Activated CD4-positive, alpha-beta T cell treated with anti-CD3 and anti-CD28 coated beads, Interleukin-2, amount 10 ng/mL, durations not matched to agents 24 days and 14 days (primary cell): ENCODE measurements at regions of chr10 and their contacts with region 1.

Region 1: DNA sequence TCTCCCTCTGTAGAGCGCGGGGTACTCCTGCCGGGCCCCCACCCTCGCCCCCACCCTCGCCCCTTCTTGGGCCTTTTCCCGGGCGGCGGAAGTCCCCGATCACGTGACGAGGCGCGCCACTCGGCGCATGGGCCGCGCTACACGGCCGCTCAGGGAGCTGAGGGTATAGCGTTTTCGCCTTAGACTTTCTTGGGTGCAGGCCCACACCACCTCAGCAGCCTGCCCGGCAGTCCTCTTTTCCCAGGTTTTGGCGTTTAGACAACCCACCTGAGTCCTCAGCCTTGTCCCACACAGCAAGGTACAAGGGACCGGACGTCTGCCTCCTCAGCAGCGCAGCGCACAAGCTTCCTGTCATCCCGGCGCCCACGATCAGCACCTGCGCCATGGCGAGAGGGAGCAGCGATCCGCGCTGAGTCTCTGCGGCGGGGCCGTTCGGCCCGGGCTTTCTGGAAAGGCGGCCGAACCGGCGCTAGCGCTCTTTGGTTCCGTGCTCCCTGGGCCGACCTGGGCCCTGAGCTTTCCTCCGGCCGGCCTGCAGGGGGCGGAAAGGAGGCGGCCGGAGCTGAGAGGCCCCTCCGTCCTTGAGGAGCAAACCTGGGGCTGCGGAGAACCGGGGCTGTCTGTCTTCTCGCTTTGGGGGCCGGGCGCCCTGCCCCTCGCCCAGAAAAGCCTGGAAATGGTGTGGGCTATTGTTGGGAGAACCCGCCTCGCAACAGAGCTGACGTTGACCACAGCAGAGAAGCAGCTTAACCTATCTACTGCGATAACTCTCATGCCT is at the start of gene RNLS:
- DNase-seq: peak; percentile 88
- H3K4me3 Mint-ChIP-seq: peak within 1 kb of the TSS; percentile 87
- H3K27ac Mint-ChIP-seq: peak within 1 kb of the TSS; percentile 89
- H3K4me1 Mint-ChIP-seq: peaks cover 8% of the 10 kb centered on the region
- H3K27me3 Mint-ChIP-seq: peaks cover 19% of the 10 kb centered on the region
- total RNA-seq, gene RNLS: 2.1 and 2.4 TPM in 2 replicates

Region 2: DNA sequence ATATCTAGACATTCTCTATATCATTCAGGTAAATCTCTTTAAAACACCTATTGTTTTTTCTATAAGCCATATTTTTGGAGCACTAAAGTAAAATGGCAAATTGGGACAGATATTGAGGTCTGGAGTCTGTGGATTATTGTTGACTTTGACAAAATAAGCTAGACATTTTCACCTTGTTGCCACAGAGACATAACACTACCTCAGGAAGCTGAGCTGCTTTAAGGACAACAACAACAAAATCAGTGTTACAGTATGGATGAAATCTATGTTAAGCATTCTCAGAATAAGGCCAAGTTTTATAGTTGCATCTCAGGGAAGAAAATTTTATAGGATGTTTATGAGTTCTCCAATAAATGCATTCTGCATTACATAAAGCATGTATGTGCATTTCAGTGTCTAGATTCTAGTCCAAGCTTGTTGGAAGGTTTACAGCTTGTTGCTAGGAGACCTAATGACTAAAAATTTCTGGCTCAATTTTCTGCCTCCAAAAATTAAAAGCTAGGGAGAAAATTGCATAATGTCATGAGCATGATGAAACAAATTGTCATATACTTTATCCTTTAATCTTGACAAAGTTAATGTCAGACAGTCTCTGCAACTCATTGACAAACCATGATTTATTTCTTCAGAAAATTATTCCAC is 237.9 kb after region 1 on chr10:
- intact Hi-C with region 1: loop called (anchors 10 kb)
- DNase-seq: no peak
- H3K4me3 Mint-ChIP-seq: no peak overlapping the region
- H3K27ac Mint-ChIP-seq: no peak overlapping the region
- H3K4me1 Mint-ChIP-seq: peaks cover 19% of the 10 kb centered on the region
- H3K27me3 Mint-ChIP-seq: peaks cover 10% of the 10 kb centered on the region